ENCODE measurements at regions of chr1 and their contacts with region 1.

Region 1: DNA sequence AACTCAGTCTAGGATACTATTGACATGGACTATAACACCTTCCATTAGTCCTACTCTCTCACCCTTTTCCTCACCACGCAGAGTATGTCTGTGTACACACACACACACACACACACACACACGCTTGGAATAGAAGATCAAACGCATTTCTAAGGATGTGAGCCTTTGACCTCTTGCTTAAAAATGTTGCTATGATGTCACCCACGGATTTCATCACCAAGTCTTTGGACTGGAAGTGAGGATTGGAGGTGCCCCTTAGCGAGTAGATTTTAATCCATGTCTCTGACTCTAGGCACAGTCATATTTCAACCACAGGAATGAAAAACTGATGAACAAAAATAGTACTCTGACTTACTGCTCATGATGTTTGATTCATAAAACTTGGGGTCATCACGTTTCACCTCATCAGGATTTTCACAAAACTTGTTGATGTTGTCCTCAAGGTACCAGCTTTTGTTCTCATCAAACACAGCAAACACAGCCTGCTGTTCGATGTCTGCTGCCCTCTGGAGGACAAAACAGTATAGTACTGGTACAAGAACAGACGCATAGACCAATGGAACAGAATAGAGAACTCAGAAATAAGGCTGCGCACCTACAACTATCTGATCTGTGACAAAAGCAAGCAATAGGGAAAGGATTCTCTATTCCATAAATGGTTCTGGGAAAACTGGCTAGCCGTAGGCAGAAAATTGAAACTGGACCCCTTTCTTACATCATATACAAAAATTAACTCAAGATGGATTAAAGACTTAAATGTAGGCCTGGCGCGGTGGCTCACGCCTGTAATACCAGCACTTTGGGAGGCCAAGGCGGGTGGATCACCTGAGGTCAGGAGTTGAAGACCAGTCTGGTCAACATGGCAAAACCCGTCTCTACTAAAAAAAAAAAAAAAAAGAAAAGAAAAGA is 39.9 kb downstream of the F5 start:
- DNase-seq: peak; percentile 80
- H3K4me3 ChIP-seq: no peak overlapping the region
- H3K27ac ChIP-seq: no peak overlapping the region
- H3K4me1 ChIP-seq: no peaks in the 10 kb centered on the region
- H3K27me3 ChIP-seq: no peaks in the 10 kb centered on the region
- CTCF ChIP-seq: peak; percentile 80

Region 2: GRCh38 chr1:168348146-168348709 is 1198.1 kb before region 1 on chr1:
- CTCF ChIA-PET with region 1: no interaction called
- POLR2A ChIA-PET with region 1: no interaction called
- intact Hi-C with region 1: loop called (anchors 5 kb)
- DNase-seq: no peak
- H3K4me3 ChIP-seq: peak overlapping the region; percentile 4
- H3K27ac ChIP-seq: no peak overlapping the region
- H3K4me1 ChIP-seq: no peaks in the 10 kb centered on the region
- H3K27me3 ChIP-seq: no peaks in the 10 kb centered on the region
- CTCF ChIP-seq: no peak

Region 3: GRCh38 chr1:168439456-168440375 is 1106.6 kb before region 1 on chr1:
- CTCF ChIA-PET with region 1: interaction called, 3 read pairs
- POLR2A ChIA-PET with region 1: no interaction called
- intact Hi-C with region 1: loop called (anchors 10 kb)
- DNase-seq: peak; percentile 93
- H3K4me3 ChIP-seq: no peak overlapping the region
- H3K27ac ChIP-seq: no peak overlapping the region
- H3K4me1 ChIP-seq: no peaks in the 10 kb centered on the region
- H3K27me3 ChIP-seq: no peaks in the 10 kb centered on the region
- CTCF ChIP-seq: peak; percentile 91

Region 4: GRCh38 chr1:169367486-169368405 is 178.6 kb before region 1 on chr1 and contains the starts of genes BLZF1 and NME7:
- CTCF ChIA-PET with region 1: no interaction called
- POLR2A ChIA-PET with region 1: no interaction called
- intact Hi-C with region 1: no loop called
- DNase-seq: peak; percentile 99
- H3K4me3 ChIP-seq: peak within 1 kb of the TSS; percentile 72
- H3K27ac ChIP-seq: peak within 1 kb of the TSS; percentile 96
- H3K4me1 ChIP-seq: peaks cover 15% of the 10 kb centered on the region
- H3K27me3 ChIP-seq: no peaks in the 10 kb centered on the region
- CTCF ChIP-seq: no peak
- total RNA-seq, gene BLZF1: 20.3 and 22.5 TPM in 2 replicates
- total RNA-seq, gene NME7: 26.4 and 34.2 TPM in 2 replicates

Region 5: DNA sequence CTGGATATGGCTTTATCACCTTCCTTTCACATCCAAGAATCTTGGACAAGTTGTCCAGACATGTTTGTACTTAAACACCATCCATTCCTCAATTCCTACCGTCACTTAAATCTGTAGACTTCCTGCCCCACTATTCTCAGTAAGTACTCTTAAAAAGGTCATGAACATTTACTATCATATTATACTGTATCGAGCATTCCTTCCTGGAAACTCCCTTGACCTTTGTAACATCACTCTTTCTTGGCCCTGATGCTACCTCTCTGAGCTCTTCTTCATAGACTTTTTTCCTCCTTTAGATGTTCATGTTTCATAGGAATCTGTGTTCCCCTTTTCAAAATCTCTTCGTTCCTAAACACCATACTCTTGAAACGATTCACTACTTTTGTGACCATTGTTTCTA is 162.9 kb before region 1 on chr1:
- CTCF ChIA-PET with region 1: no interaction called
- POLR2A ChIA-PET with region 1: no interaction called
- intact Hi-C with region 1: no loop called
- DNase-seq: no peak
- H3K4me3 ChIP-seq: no peak overlapping the region
- H3K27ac ChIP-seq: no peak overlapping the region
- H3K4me1 ChIP-seq: no peaks in the 10 kb centered on the region
- H3K27me3 ChIP-seq: no peaks in the 10 kb centered on the region
- CTCF ChIP-seq: no peak

Region 6: DNA sequence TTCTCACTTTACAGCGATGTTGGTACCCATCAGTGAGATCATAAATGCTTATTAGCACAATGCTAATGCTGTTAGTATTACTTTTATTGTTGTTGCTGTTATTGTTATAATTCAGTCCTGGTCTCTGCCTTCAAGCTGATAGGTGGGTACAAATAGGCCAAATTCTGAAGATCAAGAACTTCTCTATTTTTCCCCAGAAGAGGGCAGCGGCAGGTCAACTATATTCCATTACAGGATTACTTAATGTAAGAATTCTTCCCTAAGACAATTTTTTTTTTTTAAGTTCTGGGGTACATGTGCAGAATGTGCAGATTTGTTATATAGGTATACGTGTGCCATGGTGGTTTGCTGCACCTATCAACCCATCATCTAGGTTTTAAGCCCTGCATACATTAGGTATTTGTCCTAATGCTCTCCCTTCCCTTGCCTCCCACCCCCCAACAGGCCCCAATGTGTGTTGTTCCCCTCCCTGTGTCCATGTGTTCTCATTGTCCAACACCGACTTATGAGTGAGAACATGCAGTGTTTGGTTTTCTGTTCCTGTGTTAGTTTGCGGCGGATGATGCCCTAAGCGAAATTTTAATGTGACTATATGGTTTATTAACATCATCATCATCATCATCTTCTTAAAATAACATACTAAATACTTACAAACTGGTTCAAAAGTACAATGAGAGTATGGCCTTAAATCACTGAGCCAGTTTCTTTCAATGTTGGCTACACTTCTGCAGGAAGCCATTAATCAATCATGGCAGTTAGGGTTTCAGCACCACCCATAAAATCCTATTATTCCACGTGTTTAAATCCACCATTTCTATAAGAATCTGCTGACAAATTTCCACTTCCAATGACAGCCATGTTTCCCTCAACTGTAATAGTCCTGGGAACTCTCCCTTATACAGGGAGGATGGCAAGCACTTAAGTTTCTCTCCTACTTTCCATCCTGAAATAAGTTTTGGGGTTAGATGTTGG is 79.8 kb before region 1 on chr1:
- CTCF ChIA-PET with region 1: no interaction called
- POLR2A ChIA-PET with region 1: no interaction called
- intact Hi-C with region 1: loop called (anchors 1 kb)
- DNase-seq: peak; percentile 61
- H3K4me3 ChIP-seq: no peak overlapping the region
- H3K27ac ChIP-seq: peak overlapping the region; percentile 7
- H3K4me1 ChIP-seq: peaks cover 12% of the 10 kb centered on the region
- H3K27me3 ChIP-seq: no peaks in the 10 kb centered on the region
- CTCF ChIP-seq: peak; percentile 56

Region 7: GRCh38 chr1:169529068-169529696 is 17.2 kb before region 1 on chr1:
- CTCF ChIA-PET with region 1: no interaction called
- POLR2A ChIA-PET with region 1: no interaction called
- intact Hi-C with region 1: no loop called
- DNase-seq: no peak
- H3K4me3 ChIP-seq: no peak overlapping the region
- H3K27ac ChIP-seq: no peak overlapping the region
- H3K4me1 ChIP-seq: peaks cover 10% of the 10 kb centered on the region
- H3K27me3 ChIP-seq: no peaks in the 10 kb centered on the region
- CTCF ChIP-seq: no peak

Region 8: GRCh38 chr1:169572187-169572586 is 25.8 kb after region 1 on chr1:
- CTCF ChIA-PET with region 1: no interaction called
- POLR2A ChIA-PET with region 1: no interaction called
- intact Hi-C with region 1: no loop called
- DNase-seq: no peak
- H3K4me3 ChIP-seq: no peak overlapping the region
- H3K27ac ChIP-seq: no peak overlapping the region
- H3K4me1 ChIP-seq: no peaks in the 10 kb centered on the region
- H3K27me3 ChIP-seq: peaks cover 5% of the 10 kb centered on the region
- CTCF ChIP-seq: no peak

Region 9: DNA sequence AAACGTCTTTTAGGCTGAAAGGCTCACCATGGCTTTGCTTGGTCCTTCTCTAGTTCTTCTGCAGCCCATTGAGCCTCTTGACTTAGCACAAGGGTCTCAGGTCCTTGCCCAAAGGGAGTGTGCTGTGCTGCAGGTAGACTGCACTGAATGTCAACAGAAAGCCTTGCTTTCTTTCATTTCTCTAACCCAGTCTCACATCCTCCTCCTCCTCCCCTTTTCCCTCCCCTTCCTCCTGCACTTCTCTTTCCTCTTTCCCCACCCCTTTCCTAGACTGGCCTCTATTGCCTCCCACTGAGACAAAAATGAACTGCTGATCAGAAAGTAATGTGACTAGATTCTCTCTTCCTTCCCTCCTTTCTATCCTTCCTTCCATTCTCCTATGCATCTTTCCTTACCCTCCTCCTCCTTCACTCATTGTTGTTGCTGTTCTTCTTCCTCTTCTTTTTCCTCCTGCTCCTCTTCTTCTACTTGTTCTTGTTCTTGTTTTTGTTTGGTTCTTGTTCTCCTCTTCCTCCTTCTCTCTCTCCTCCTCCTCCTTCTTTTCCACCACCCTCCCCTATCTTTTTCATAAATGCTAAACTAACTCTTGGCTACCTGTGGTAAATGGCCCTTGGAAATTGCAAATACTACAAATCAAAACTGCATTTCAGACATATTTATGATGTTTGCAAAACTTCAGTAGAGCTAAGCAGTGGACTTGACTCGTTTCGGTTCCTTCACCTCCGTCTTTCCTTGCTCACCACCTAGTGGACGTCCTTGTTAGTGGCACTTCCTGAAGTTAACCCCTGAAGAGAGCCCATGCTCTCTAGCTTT is 165.3 kb after region 1 on chr1 and contains the start of gene SELL:
- CTCF ChIA-PET with region 1: no interaction called
- POLR2A ChIA-PET with region 1: no interaction called
- intact Hi-C with region 1: loop called (anchors 2 kb)
- DNase-seq: peak; percentile 79
- H3K4me3 ChIP-seq: peak within 1 kb of the TSS; percentile 24
- H3K27ac ChIP-seq: no peak within 1 kb of the TSS
- H3K4me1 ChIP-seq: no peaks in the 10 kb centered on the region
- H3K27me3 ChIP-seq: peaks cover 23% of the 10 kb centered on the region
- CTCF ChIP-seq: peak; percentile 83
- total RNA-seq, gene SELL: not detected in 2 replicates

Region 10: GRCh38 chr1:169809370-169810095 is 263.2 kb after region 1 on chr1:
- CTCF ChIA-PET with region 1: no interaction called
- POLR2A ChIA-PET with region 1: no interaction called
- intact Hi-C with region 1: loop called (anchors 1 kb)
- DNase-seq: peak; percentile 44
- H3K4me3 ChIP-seq: no peak overlapping the region
- H3K27ac ChIP-seq: no peak overlapping the region
- H3K4me1 ChIP-seq: no peaks in the 10 kb centered on the region
- H3K27me3 ChIP-seq: no peaks in the 10 kb centered on the region
- CTCF ChIP-seq: peak; percentile 68